BJ (cell line): ENCODE measurements at regions of chr11 and their contacts with region 1.

Region 1: DNA sequence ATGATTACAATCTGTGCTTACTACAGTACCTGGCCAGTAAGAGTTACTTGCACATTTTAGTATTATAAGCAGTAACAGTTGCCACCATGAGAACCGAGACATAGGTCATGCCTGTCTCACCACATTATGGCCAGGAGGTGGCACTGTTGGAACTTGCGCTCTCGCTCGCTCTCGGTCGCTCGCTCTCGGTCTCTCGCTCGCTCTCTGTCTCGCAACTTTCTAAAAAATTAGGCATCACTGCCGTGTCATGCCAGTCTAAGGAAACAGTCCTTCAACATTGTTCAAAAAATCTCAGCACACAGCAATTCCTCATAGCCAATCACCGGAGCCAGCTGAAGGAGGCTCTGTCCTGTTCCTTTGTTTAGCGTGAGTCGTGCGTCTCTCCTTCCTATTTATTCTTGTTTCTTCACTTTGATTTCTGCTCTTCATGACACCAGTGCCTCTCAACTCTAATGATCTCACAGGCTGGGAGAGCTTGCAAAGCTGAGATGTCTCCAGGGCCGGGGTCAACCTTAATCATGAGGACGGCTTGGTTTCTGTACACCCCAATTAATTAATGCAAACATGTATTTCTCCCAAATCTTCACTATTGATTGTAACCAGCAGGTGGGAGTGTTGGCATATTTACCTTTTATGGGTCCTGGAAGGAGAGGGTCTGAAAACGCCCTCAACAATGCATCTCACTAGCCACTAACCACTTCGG is 6.3 kb upstream of the ADAMTS8 start:
- DNase-seq: no peak
- H3K4me3 ChIP-seq: peak overlapping the region; percentile 66
- H3K27me3 ChIP-seq: peaks cover 8% of the 10 kb centered on the region
- CTCF ChIP-seq: peak; percentile 84

Region 2: GRCh38 chr11:130213143-130213978 is 221.3 kb before region 1 on chr11:
- CTCF ChIA-PET with region 1: interaction called, 14 read pairs
- POLR2A ChIA-PET with region 1: no interaction called
- DNase-seq: no peak
- H3K4me3 ChIP-seq: no peak overlapping the region
- H3K27me3 ChIP-seq: peaks cover 38% of the 10 kb centered on the region
- CTCF ChIP-seq: peak; percentile 97

Region 3: DNA sequence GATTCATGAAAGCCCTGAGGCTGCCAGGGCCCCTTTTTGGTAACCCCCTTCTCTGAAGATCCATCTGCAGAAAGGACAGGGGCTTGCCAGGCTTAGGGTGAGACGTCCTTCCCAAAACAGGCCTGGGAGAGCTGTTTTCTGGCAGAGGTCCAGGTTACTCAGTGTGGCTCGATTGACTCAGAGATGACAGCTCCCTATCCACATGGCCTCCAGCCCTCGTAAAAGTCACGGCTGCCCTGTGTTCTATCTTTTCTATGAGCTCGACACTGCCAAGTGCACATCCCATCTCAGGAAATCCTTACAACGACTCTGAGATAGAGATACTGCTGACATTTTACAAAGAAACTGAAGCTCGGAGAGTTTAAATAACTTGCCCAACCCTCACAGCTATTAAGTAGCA is 26.7 kb before region 1 on chr11:
- CTCF ChIA-PET with region 1: interaction called, 10 read pairs
- POLR2A ChIA-PET with region 1: no interaction called
- DNase-seq: peak; percentile 62
- H3K4me3 ChIP-seq: no peak overlapping the region
- H3K27me3 ChIP-seq: peaks cover 2% of the 10 kb centered on the region; the same call in 1 of the 2 replicates
- CTCF ChIP-seq: no peak

Region 4: DNA sequence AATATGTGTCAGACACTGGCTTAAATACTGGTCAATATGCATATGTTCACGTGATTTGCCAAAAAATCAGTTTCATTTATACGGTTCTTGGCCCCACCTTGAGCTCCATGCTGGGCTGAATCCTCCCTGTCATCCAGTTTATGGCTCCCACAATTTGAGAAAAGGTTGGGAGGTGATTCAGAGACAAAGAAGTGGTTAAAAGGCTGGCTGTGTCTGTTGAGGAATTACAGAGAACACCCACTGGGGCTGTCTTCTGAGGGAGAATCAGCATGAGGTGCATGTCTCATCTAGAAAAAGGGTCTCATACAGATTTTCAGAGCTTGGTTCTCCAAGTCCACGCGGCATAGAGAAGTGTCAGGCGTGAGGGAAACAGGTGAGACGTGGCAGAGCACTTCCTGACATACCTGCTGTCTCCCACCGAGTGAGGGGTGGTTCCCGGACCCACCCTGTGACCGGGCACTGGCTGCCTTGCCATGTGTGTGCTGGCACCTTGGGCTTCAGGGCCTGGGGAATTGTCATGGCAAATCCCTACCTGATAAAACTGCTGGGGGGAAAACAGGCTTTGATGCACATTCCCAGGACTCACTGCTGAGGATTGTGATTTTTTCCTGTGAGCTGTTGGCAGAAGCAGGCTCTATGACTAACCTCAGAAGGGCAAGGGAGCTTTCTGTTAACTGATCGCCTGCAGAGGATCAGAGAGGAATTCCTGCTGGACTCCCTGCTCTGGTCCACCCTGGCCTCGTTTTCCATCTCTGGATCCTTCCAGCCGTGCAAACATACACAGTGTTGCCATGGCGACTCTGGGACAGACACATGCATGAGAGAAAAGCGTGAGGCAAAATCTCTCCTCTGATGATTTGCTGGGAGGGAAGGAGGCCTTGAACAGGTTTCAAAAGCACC is 237.4 kb after region 1 on chr11:
- CTCF ChIA-PET with region 1: interaction called, 12 read pairs
- POLR2A ChIA-PET with region 1: no interaction called
- DNase-seq: peak; percentile 57
- H3K4me3 ChIP-seq: no peak overlapping the region
- H3K27me3 ChIP-seq: no peaks in the 10 kb centered on the region
- CTCF ChIP-seq: no peak

Region 5: GRCh38 chr11:130847517-130847916 is 412.8 kb after region 1 on chr11:
- CTCF ChIA-PET with region 1: interaction called, 16 read pairs
- POLR2A ChIA-PET with region 1: no interaction called
- DNase-seq: no peak
- H3K4me3 ChIP-seq: no peak overlapping the region
- H3K27me3 ChIP-seq: no peaks in the 10 kb centered on the region
- CTCF ChIP-seq: no peak

Region 6: DNA sequence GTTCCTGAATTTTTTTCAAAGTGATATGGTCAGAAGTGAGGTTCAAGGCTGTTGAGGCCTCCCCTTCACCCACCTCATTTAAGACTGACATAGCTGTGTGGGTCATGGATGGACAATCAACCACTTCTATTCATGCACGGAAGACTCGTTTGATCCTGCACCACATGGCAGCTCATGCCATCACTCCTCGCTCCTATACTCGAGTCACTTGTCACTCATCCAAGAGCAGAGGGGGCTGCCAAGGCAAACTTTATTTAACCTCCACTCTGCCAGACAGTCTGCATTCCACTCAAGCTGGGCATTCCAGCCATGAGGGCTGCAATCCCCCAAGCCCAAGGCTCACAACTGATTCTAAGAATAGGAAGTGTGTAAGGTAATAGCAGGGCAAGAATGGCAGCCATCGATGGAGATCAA is 447.5 kb after region 1 on chr11:
- CTCF ChIA-PET with region 1: interaction called, 10 read pairs
- POLR2A ChIA-PET with region 1: no interaction called
- DNase-seq: no peak
- H3K4me3 ChIP-seq: no peak overlapping the region
- H3K27me3 ChIP-seq: no peaks in the 10 kb centered on the region
- CTCF ChIP-seq: no peak

Region 7: GRCh38 chr11:130916238-130916855 is 481.7 kb after region 1 on chr11 and contains the start of gene SNX19:
- CTCF ChIA-PET with region 1: interaction called, 34 read pairs
- POLR2A ChIA-PET with region 1: no interaction called
- DNase-seq: peak; percentile 44
- H3K4me3 ChIP-seq: peak within 1 kb of the TSS; percentile 85
- H3K27me3 ChIP-seq: no peaks in the 10 kb centered on the region
- CTCF ChIP-seq: peak; percentile 75
- polyA plus RNA-seq, gene SNX19: 85.4 and 99.9 TPM in 2 replicates